Activated CD4-positive, alpha-beta T cell treated with anti-CD3 and anti-CD28 coated beads for 36 hours (primary cell): ENCODE measurements at regions of chrX and their contacts with region 1.

Region 1: GRCh38 chrX:149230689-149231088 is 274.4 kb downstream of the IDS start:
- DNase-seq: peak; percentile 13
- ATAC-seq: peak; percentile 85
- H3K4me3 Mint-ChIP-seq: no peak overlapping the region
- H3K27ac Mint-ChIP-seq: no peak overlapping the region
- H3K4me1 Mint-ChIP-seq: peaks cover 11% of the 10 kb centered on the region
- H3K27me3 Mint-ChIP-seq: peaks cover 2% of the 10 kb centered on the region

Region 2: GRCh38 chrX:148854209-148854691 is 376.4 kb before region 1 on chrX:
- CTCF ChIA-PET with region 1: no interaction called
- POLR2A ChIA-PET with region 1: no interaction called
- intact Hi-C with region 1: no loop called
- DNase-seq: no peak
- ATAC-seq: no peak
- H3K4me3 Mint-ChIP-seq: no peak overlapping the region
- H3K27ac Mint-ChIP-seq: no peak overlapping the region
- H3K4me1 Mint-ChIP-seq: no peaks in the 10 kb centered on the region
- H3K27me3 Mint-ChIP-seq: no peaks in the 10 kb centered on the region

Region 3: GRCh38 chrX:149198980-149199732 is 31.5 kb before region 1 on chrX:
- CTCF ChIA-PET with region 1: no interaction called
- POLR2A ChIA-PET with region 1: no interaction called
- intact Hi-C with region 1: loop called in 1 of 2 experiments (anchors 2 kb)
- DNase-seq: peak; percentile 59
- ATAC-seq: peak; percentile 93
- H3K4me3 Mint-ChIP-seq: no peak overlapping the region
- H3K27ac Mint-ChIP-seq: no peak overlapping the region
- H3K4me1 Mint-ChIP-seq: peaks cover 12% of the 10 kb centered on the region
- H3K27me3 Mint-ChIP-seq: peaks cover 7% of the 10 kb centered on the region

Region 4: GRCh38 chrX:149267878-149268813 is 37.5 kb after region 1 on chrX:
- CTCF ChIA-PET with region 1: no interaction called
- POLR2A ChIA-PET with region 1: no interaction called
- intact Hi-C with region 1: loop called (anchors 1 kb)
- DNase-seq: peak; percentile 38
- ATAC-seq: peak; percentile 86
- H3K4me3 Mint-ChIP-seq: no peak overlapping the region
- H3K27ac Mint-ChIP-seq: peak overlapping the region; percentile 40
- H3K4me1 Mint-ChIP-seq: peaks cover 23% of the 10 kb centered on the region
- H3K27me3 Mint-ChIP-seq: peaks cover 15% of the 10 kb centered on the region

Region 5: GRCh38 chrX:149296092-149296491 is 65.4 kb after region 1 on chrX:
- CTCF ChIA-PET with region 1: no interaction called
- POLR2A ChIA-PET with region 1: no interaction called
- intact Hi-C with region 1: no loop called
- DNase-seq: no peak
- ATAC-seq: no peak
- H3K4me3 Mint-ChIP-seq: no peak overlapping the region
- H3K27ac Mint-ChIP-seq: no peak overlapping the region
- H3K4me1 Mint-ChIP-seq: no peaks in the 10 kb centered on the region
- H3K27me3 Mint-ChIP-seq: no peaks in the 10 kb centered on the region